GM12878 (cell line): ENCODE measurements at regions of chr1 and their contacts with region 1.

Region 1: GRCh38 chr1:226827968-226828513 is 42.4 kb upstream of the PSEN2 start:
- DNase-seq: peak; percentile 62
- ATAC-seq: peak; percentile 95
- H3K4me3 ChIP-seq: no peak overlapping the region; the same call in 1 of the 2 replicates
- H3K27ac ChIP-seq: peak overlapping the region; percentile 85
- H3K4me1 ChIP-seq: peaks cover 31% of the 10 kb centered on the region
- H3K27me3 ChIP-seq: no peaks in the 10 kb centered on the region
- CTCF ChIP-seq: peak; percentile 93 to 98 (median 96)
- EP300 ChIP-seq: 0 out of 4 replicates have a peak, but pooled peaks of 1 of the 2 experiments have one; percentile 42
- POLR2A ChIP-seq: peak; percentile 27; the same call in 1 of the 2 replicates
- RAD21 ChIP-seq: peak; percentile 99

Region 2: GRCh38 chr1:226634166-226634588 is 193.9 kb before region 1 on chr1:
- CTCF ChIA-PET with region 1: interaction called, 112 read pairs
- POLR2A ChIA-PET with region 1: interaction called, 3 read pairs
- RAD21 ChIA-PET with region 1: interaction called, 42 read pairs
- SMC1A ChIA-PET with region 1: interaction called, 86 read pairs
- in situ Hi-C with region 1: loop called (anchors 5 kb)
- intact Hi-C with region 1: loop called (anchors 1 kb)
- DNase-seq: no peak
- ATAC-seq: peak; percentile 97
- H3K4me3 ChIP-seq: no peak overlapping the region
- H3K27ac ChIP-seq: no peak overlapping the region
- H3K4me1 ChIP-seq: peaks cover 21% of the 10 kb centered on the region
- H3K27me3 ChIP-seq: no peaks in the 10 kb centered on the region
- CTCF ChIP-seq: peak; percentile 85 to 96 (median 95)
- EP300 ChIP-seq: no peak
- POLR2A ChIP-seq: no peak
- RAD21 ChIP-seq: peak; percentile 94

Region 3: DNA sequence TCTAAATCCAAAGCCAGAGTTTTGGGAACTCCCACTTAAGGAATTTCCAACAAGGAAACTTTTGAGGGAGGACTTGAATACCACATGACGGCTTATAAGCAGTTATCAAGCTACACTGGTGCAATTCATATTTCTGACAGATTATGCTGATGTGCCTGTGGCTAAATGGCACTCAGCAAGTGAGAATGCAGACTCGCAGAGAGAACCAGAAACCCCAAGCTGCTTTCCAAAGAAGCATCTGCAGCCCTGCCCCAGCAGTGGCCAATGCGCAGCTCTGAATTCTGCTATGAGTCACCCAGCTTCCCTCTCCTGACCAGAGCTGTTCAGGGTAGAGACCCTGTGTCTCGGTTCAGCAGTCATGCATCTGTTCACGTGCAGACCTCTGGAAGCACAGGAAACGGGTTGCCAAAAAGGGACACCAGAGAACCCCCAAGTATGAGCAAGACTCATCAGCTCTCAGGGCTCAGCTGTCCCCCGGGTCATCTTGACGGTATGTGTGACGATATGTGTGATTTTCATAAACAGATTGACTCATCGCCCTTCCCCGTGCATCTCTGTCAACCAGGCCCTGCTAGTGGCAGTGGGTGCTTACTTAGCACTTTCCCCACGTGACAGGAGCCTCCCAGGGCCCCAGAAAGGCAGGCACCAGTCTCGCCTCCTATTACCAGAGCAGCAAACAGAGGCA is 165.3 kb before region 1 on chr1:
- CTCF ChIA-PET with region 1: interaction called, 5 read pairs
- POLR2A ChIA-PET with region 1: no interaction called
- RAD21 ChIA-PET with region 1: interaction called, 17 read pairs
- SMC1A ChIA-PET with region 1: interaction called, 7 read pairs
- in situ Hi-C with region 1: no loop called
- intact Hi-C with region 1: no loop called
- DNase-seq: peak; percentile 99
- ATAC-seq: peak; percentile 95
- H3K4me3 ChIP-seq: peak overlapping the region; percentile 5; the same call in 1 of the 2 replicates
- H3K27ac ChIP-seq: peak overlapping the region; percentile 48
- H3K4me1 ChIP-seq: peaks cover 57% of the 10 kb centered on the region
- H3K27me3 ChIP-seq: no peaks in the 10 kb centered on the region
- CTCF ChIP-seq: no peak
- EP300 ChIP-seq: peak; percentile 98
- POLR2A ChIP-seq: no peak
- RAD21 ChIP-seq: peak; percentile 14; the same call in 1 of the 2 replicates

Region 4: DNA sequence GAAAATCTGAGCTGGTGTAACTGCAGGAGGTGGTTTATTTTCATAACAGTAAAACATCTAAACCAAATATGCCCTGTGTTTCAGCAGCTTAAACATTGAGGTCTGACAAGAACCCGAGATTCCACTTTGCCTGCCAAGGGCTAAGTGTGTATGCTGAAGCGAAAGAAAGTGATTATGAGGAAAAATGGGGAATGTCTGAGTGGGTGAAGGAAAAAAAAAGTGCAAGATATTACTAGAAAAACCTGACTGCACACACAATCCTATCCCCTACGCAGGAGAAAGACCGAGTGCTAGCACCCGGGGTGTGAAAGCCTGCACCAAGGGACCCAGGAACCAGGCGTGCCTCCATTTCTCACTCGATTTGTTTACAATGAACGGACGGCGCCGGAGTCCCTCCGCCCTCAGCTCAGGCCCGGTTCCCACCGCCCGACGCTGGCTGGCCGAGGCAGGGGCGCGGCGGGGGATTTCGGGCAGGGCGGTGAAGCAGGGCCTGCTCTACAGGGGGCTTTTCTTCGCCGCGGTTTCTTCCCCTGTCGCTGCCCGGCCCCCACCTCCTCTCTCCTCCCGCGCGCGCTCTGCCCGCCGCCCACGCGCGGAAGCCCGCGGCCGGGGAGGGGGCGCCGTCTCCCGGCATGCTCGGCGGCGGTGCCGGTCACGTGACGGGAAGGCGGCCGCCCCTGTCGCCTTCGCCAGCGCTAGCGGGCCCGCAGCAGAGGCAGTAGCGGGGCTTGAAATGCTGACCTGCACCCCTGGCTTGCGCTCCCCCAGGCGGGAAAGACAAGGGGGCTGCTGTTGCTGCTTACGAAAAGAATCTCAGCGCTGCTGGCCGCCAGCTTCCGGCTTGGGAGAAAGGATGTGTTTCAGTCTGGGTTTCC is 124.8 kb before region 1 on chr1:
- CTCF ChIA-PET with region 1: interaction called, 6 read pairs
- POLR2A ChIA-PET with region 1: interaction called, 3 read pairs
- RAD21 ChIA-PET with region 1: interaction called, 20 read pairs
- SMC1A ChIA-PET with region 1: interaction called, 16 read pairs
- in situ Hi-C with region 1: no loop called
- intact Hi-C with region 1: loop called (anchors 5 kb)
- DNase-seq: no peak
- ATAC-seq: peak; percentile 92
- H3K4me3 ChIP-seq: peak overlapping the region; percentile 54
- H3K27ac ChIP-seq: peak overlapping the region; percentile 92
- H3K4me1 ChIP-seq: peaks cover 12% of the 10 kb centered on the region
- H3K27me3 ChIP-seq: no peaks in the 10 kb centered on the region
- CTCF ChIP-seq: no peak
- EP300 ChIP-seq: peak in 1 of 2 experiments; percentile 41; a peak in 1 of 4 replicates
- POLR2A ChIP-seq: peak; percentile 93
- RAD21 ChIP-seq: no peak

Region 5: DNA sequence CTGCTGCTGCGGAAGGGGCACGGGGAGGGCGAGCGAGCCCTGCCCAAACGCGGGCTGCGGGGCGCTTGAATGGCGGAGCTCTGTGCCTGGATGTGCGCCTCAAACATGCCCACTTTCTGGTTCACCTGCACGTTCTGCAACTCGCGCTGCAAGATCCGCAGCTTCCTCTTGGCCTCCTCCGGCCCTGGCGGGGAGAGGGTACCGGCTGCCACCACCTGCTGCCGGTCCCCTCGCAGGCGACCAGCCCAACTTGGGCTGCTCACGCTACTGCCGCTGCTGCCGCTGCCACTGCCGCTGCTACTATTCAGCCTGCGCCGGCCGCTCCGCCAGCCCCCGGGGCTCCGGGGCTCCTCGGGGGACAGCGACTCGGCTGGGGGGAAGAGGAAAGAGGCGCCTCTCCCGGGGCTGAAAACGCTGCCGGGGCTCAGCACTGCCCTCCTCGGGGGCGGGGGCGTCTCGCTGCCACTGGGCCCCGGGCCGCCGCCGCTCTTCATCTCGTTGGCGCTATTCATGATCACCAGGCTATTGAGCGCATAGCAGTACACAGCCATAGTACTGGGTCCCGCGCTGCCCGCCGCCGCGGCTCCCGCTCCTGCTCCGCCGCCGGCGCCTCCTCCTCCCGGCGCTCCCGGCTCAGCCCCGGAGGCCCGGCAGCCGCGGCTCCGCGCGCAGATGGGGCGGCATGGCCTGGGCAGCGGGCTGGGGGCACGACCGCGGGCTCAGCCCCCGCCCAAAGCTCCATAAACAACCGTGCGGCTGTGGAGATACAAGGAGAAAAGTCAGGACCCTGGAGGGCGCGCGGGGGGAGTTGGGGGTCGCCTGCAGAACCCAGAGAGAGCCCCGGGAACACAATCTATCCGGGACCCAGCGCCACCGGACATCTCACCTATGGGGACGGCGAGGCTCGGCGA is 90.9 kb before region 1 on chr1:
- CTCF ChIA-PET with region 1: interaction called, 10 read pairs
- POLR2A ChIA-PET with region 1: interaction called, 32 read pairs
- RAD21 ChIA-PET with region 1: interaction called, 31 read pairs
- SMC1A ChIA-PET with region 1: interaction called, 13 read pairs
- in situ Hi-C with region 1: loop called (anchors 10 kb)
- intact Hi-C with region 1: loop called (anchors 2 kb)
- DNase-seq: no peak
- ATAC-seq: peak; percentile 46
- H3K4me3 ChIP-seq: peak overlapping the region; percentile 98
- H3K27ac ChIP-seq: peak overlapping the region; percentile 87
- H3K4me1 ChIP-seq: peaks cover 36% of the 10 kb centered on the region
- H3K27me3 ChIP-seq: no peaks in the 10 kb centered on the region
- CTCF ChIP-seq: peak in 1 of 3 experiments; percentile 14; a peak in 3 of 6 replicates
- EP300 ChIP-seq: no peak
- POLR2A ChIP-seq: no peak
- RAD21 ChIP-seq: no peak

Region 6: DNA sequence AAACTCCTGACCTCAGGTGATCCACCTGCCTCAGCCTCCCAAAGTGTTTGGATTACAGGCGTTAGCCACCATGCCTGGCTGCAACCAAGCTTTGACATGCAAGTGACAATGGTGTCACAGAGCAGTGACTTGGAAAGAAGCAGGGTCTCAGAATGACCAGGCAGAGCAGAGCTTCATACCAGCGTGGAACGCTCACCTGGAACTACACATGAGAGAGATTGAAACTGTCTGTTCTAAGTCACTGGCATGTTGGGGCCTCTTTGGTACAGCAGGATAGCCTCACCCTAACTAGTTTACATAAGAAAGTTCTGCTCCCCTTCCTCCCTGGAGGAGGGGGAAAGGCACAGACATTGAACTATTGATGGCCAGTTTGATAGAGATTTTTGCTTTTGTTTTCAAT is 41.5 kb before region 1 on chr1:
- CTCF ChIA-PET with region 1: interaction called, 3 read pairs
- POLR2A ChIA-PET with region 1: interaction called, 10 read pairs
- RAD21 ChIA-PET with region 1: interaction called, 11 read pairs
- SMC1A ChIA-PET with region 1: interaction called, 12 read pairs
- in situ Hi-C with region 1: no loop called
- intact Hi-C with region 1: loop called (anchors 2 kb)
- DNase-seq: peak; percentile 70
- ATAC-seq: peak; percentile 87
- H3K4me3 ChIP-seq: no peak overlapping the region
- H3K27ac ChIP-seq: peak overlapping the region; percentile 64; the same call in 1 of the 2 replicates
- H3K4me1 ChIP-seq: peaks cover 53% of the 10 kb centered on the region
- H3K27me3 ChIP-seq: no peaks in the 10 kb centered on the region
- CTCF ChIP-seq: no peak
- EP300 ChIP-seq: no peak
- POLR2A ChIP-seq: no peak
- RAD21 ChIP-seq: peak; percentile 23; the same call in 1 of the 2 replicates